ENCODE measurements at regions of chr11 and their contacts with region 1.

Region 1: GRCh38 chr11:118366287-118366686 is 6.9 kb downstream of the UBE4A start:
- DNase-seq: no peak
- ATAC-seq: no peak
- H3K4me3 ChIP-seq: no peak overlapping the region
- H3K27ac ChIP-seq: no peak overlapping the region
- H3K4me1 ChIP-seq: no peaks in the 10 kb centered on the region
- H3K27me3 ChIP-seq: no peaks in the 10 kb centered on the region
- CTCF ChIP-seq: no peak

Region 2: GRCh38 chr11:118462178-118462577 is 95.9 kb after region 1 on chr11:
- CTCF ChIA-PET with region 1: no interaction called
- POLR2A ChIA-PET with region 1: interaction called, 11 read pairs
- intact Hi-C with region 1: no loop called
- DNase-seq: no peak
- ATAC-seq: no peak
- H3K4me3 ChIP-seq: no peak overlapping the region
- H3K27ac ChIP-seq: no peak overlapping the region
- H3K4me1 ChIP-seq: no peaks in the 10 kb centered on the region
- H3K27me3 ChIP-seq: no peaks in the 10 kb centered on the region
- CTCF ChIP-seq: no peak